ENCODE measurements at regions of chr1 and their contacts with region 1.

Region 1: GRCh38 chr1:213996320-213997037 is 8.7 kb downstream of the PROX1 start:
- DNase-seq: no peak
- ATAC-seq: no peak
- H3K4me3 ChIP-seq: no peak overlapping the region
- H3K27ac ChIP-seq: no peak overlapping the region
- H3K4me1 ChIP-seq: no peaks in the 10 kb centered on the region
- H3K27me3 ChIP-seq: 0 out of 2 replicates have a peak, but pooled peaks cover 12% of the 10 kb centered on the region
- CTCF ChIP-seq: no peak
- POLR2A ChIP-seq: no peak
- RAD21 ChIP-seq: no peak

Region 2: GRCh38 chr1:213947200-213947775 is 49.2 kb before region 1 on chr1:
- CTCF ChIA-PET with region 1: no interaction called
- POLR2A ChIA-PET with region 1: no interaction called
- RAD21 ChIA-PET with region 1: no interaction called
- intact Hi-C with region 1: loop called (anchors 5 kb)
- DNase-seq: no peak
- ATAC-seq: no peak
- H3K4me3 ChIP-seq: no peak overlapping the region
- H3K27ac ChIP-seq: no peak overlapping the region
- H3K4me1 ChIP-seq: no peaks in the 10 kb centered on the region
- H3K27me3 ChIP-seq: peaks cover 11% of the 10 kb centered on the region; the same call in 1 of the 2 replicates
- CTCF ChIP-seq: no peak
- POLR2A ChIP-seq: no peak
- RAD21 ChIP-seq: no peak

Measured in HCT116 (cell line).